ENCODE measurements at regions of chr10 and their contacts with region 1.

Region 1: GRCh38 chr10:79242620-79243152 is 104.6 kb upstream of the PPIF start:
- DNase-seq: peak; percentile 85
- ATAC-seq: peak; percentile 50
- H3K4me3 Mint-ChIP-seq: peak overlapping the region; percentile 74
- H3K27ac Mint-ChIP-seq: peak overlapping the region; percentile 52
- H3K4me1 Mint-ChIP-seq: peaks cover 55% of the 10 kb centered on the region
- H3K27me3 Mint-ChIP-seq: no peaks in the 10 kb centered on the region

Region 2: GRCh38 chr10:78029269-78030226 is 1213.1 kb before region 1 on chr10 and contains the start of gene POLR3A:
- CTCF ChIA-PET with region 1: no interaction called
- POLR2A ChIA-PET with region 1: no interaction called
- intact Hi-C with region 1: loop called (anchors 2 to 5 kb)
- DNase-seq: peak; percentile 96
- ATAC-seq: peak; percentile 65
- H3K4me3 Mint-ChIP-seq: peak within 1 kb of the TSS; percentile 99
- H3K27ac Mint-ChIP-seq: peak within 1 kb of the TSS; percentile 98
- H3K4me1 Mint-ChIP-seq: peaks cover 34% of the 10 kb centered on the region
- H3K27me3 Mint-ChIP-seq: no peaks in the 10 kb centered on the region
- total RNA-seq, gene POLR3A: 18.3 to 19.3 TPM

Region 3: DNA sequence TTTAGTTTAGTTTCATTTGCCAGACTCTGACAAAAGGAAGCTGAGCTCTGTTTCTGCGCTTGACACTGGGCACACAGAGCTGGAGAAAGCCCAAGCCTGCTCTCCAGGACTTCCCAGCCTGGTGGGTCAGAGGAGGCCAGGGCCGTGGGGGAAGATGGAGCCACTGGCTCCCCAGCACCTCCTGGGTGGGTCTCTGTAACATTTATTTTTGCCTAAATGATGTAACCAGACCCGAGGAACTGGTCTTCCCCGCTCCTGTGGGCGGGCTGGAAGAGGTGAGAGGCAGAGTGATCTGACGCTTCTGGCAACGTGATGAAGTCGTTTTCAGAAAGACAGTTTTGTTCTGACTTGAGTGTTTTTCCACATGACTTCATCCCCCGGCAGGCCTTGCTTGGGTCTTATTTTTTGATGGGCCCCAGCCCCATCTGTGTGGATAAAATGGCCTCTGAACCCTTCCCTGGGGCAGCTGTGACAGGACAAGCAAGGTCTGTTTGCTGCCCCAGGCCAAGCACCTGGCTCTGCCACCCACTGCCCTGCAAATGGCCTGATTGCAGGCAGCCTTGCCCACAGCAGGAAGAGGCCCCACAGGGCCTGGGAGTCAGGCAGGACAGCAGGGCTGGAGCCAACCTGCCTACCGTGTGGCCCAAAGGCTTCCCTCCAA is 478.9 kb before region 1 on chr10:
- CTCF ChIA-PET with region 1: no interaction called
- POLR2A ChIA-PET with region 1: no interaction called
- intact Hi-C with region 1: loop called in 1 of 2 experiments (anchors 5 kb)
- DNase-seq: peak; percentile 85
- ATAC-seq: peak; percentile 88
- H3K4me3 Mint-ChIP-seq: no peak overlapping the region
- H3K27ac Mint-ChIP-seq: peak overlapping the region; percentile 91
- H3K4me1 Mint-ChIP-seq: peaks cover 21% of the 10 kb centered on the region
- H3K27me3 Mint-ChIP-seq: no peaks in the 10 kb centered on the region

Region 4: GRCh38 chr10:79068562-79069324 is 173.9 kb before region 1 on chr10 and contains the start of gene ZMIZ1:
- CTCF ChIA-PET with region 1: no interaction called
- POLR2A ChIA-PET with region 1: no interaction called
- intact Hi-C with region 1: loop called in 1 of 2 experiments (anchors 1 kb)
- DNase-seq: peak; percentile 89
- ATAC-seq: peak; percentile 72
- H3K4me3 Mint-ChIP-seq: peak within 1 kb of the TSS; percentile 73
- H3K27ac Mint-ChIP-seq: peak within 1 kb of the TSS; percentile 58
- H3K4me1 Mint-ChIP-seq: peaks cover 32% of the 10 kb centered on the region
- H3K27me3 Mint-ChIP-seq: peaks cover 3% of the 10 kb centered on the region
- total RNA-seq, gene ZMIZ1: 33.9 to 34.3 TPM

Region 5: GRCh38 chr10:79322616-79323543 is 80.2 kb after region 1 on chr10:
- CTCF ChIA-PET with region 1: interaction called, 3 read pairs
- POLR2A ChIA-PET with region 1: no interaction called
- intact Hi-C with region 1: loop called in 1 of 2 experiments (anchors 5 kb)
- DNase-seq: peak; percentile 91
- ATAC-seq: peak; percentile 75
- H3K4me3 Mint-ChIP-seq: peak overlapping the region; percentile 46
- H3K27ac Mint-ChIP-seq: peak overlapping the region; percentile 94
- H3K4me1 Mint-ChIP-seq: peaks cover 70% of the 10 kb centered on the region
- H3K27me3 Mint-ChIP-seq: no peaks in the 10 kb centered on the region

Region 6: GRCh38 chr10:79445141-79445976 is 202.7 kb after region 1 on chr10 and contains the start of gene ZCCHC24:
- CTCF ChIA-PET with region 1: interaction called, 3 read pairs
- POLR2A ChIA-PET with region 1: no interaction called
- intact Hi-C with region 1: loop called in 1 of 2 experiments (anchors 1 kb)
- DNase-seq: peak; percentile 93
- ATAC-seq: peak; percentile 97
- H3K4me3 Mint-ChIP-seq: peak within 1 kb of the TSS; percentile 65
- H3K27ac Mint-ChIP-seq: no peak within 1 kb of the TSS
- H3K4me1 Mint-ChIP-seq: peaks cover 16% of the 10 kb centered on the region
- H3K27me3 Mint-ChIP-seq: peaks cover 7% of the 10 kb centered on the region
- total RNA-seq, gene ZCCHC24: 0.53 to 0.75 TPM

Measured in activated CD4-positive, alpha-beta T cell treated with anti-CD3 and anti-CD28 coated beads for 36 hours (primary cell).